ENCODE measurements at regions of chr10 and their contacts with region 1.

Region 1: GRCh38 chr10:14191871-14192270 is 138.9 kb downstream of the FRMD4A start:
- DNase-seq: no peak
- ATAC-seq: no peak
- H3K4me3 ChIP-seq: no peak overlapping the region
- H3K27ac ChIP-seq: no peak overlapping the region
- H3K4me1 ChIP-seq: no peaks in the 10 kb centered on the region
- H3K27me3 ChIP-seq: no peaks in the 10 kb centered on the region
- CTCF ChIP-seq: no peak
- POLR2A ChIP-seq: no peak

Region 2: GRCh38 chr10:13945390-13946208 is 246.3 kb before region 1 on chr10:
- intact Hi-C with region 1: no loop called
- DNase-seq: peak in 2 of 3 donors; percentile 43 to 51
- ATAC-seq: peak; percentile 77 to 89 (median 86)
- H3K4me3 ChIP-seq: no peak overlapping the region
- H3K27ac ChIP-seq: peak overlapping the region; percentile 8 to 65 (median 49)
- H3K4me1 ChIP-seq: peaks cover 0 to 9% (median under 1%) of the 10 kb centered on the region in 4 donors
- H3K27me3 ChIP-seq: no peaks in the 10 kb centered on the region
- CTCF ChIP-seq: no peak
- POLR2A ChIP-seq: no peak

Region 3: DNA sequence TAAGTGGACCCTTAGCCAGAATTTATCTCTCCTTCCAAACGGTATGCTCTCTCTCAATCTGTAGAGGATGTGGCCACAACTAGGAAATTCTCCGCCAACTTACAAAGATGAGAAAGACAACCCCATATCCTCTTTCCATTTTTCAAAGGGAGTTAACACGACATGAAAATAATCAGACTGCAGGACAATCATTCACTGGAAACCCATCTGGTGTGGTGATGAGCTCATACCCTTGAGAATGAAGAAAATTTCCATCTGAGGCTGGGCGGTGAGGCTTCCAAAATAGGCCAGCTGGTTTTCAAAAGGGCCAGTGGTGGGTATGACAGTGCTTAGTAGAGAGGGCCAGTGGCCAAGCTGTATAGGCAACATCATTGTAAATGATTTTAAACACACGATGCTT is 230.8 kb before region 1 on chr10:
- intact Hi-C with region 1: no loop called
- DNase-seq: no peak
- ATAC-seq: no peak
- H3K4me3 ChIP-seq: no peak overlapping the region
- H3K27ac ChIP-seq: peak overlapping the region in 1 of 3 donors; percentile 6
- H3K4me1 ChIP-seq: no peaks in the 10 kb centered on the region
- H3K27me3 ChIP-seq: no peaks in the 10 kb centered on the region
- CTCF ChIP-seq: no peak
- POLR2A ChIP-seq: no peak

Region 4: GRCh38 chr10:14056610-14057332 is 135.1 kb before region 1 on chr10:
- intact Hi-C with region 1: no loop called
- DNase-seq: no peak
- ATAC-seq: peak in 3 of 4 donors; percentile 44 to 89 (median 78)
- H3K4me3 ChIP-seq: no peak overlapping the region
- H3K27ac ChIP-seq: no peak overlapping the region
- H3K4me1 ChIP-seq: peaks cover 0 to 6% (median 0%) of the 10 kb centered on the region in 4 donors
- H3K27me3 ChIP-seq: no peaks in the 10 kb centered on the region
- CTCF ChIP-seq: no peak
- POLR2A ChIP-seq: no peak

Region 5: DNA sequence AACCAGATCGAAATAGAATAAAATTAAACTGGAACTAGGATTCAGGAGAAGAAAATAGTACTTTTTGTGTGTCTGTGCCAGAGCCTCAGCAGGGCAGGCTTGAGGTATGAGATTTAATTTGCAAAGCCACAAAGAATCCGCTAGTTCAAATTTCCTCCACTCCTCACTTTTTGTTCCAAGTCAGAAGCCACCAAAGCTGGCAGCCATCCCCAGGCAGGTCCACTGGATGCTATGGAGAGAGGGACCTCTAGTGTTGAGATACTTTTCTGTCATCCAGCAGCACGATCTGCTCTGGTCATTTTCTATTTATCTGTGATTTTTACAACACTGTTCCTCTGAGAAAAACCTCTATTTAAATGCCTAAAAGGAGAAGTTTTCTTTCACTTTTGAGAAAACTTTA is 286.7 kb after region 1 on chr10:
- intact Hi-C with region 1: loop called in 1 of 2 experiments (anchors 10 kb)
- DNase-seq: peak; percentile 38 to 57 (median 53)
- ATAC-seq: peak; percentile 58 to 80 (median 73)
- H3K4me3 ChIP-seq: no peak overlapping the region
- H3K27ac ChIP-seq: no peak overlapping the region
- H3K4me1 ChIP-seq: no peaks in the 10 kb centered on the region
- H3K27me3 ChIP-seq: no peaks in the 10 kb centered on the region
- CTCF ChIP-seq: peak; percentile 33 to 53 (median 48)
- POLR2A ChIP-seq: no peak